T-cell (primary cell): ENCODE measurements at regions of chr10 and their contacts with region 1.

Region 1: GRCh38 chr10:17248964-17249363 is 20.9 kb downstream of the VIM start:
- DNase-seq: no peak
- ATAC-seq: no peak
- H3K4me3 ChIP-seq: no peak overlapping the region
- H3K4me3 Mint-ChIP-seq: no peak overlapping the region
- H3K27ac ChIP-seq: no peak overlapping the region
- H3K27ac Mint-ChIP-seq: no peak overlapping the region
- H3K4me1 ChIP-seq: no peaks in the 10 kb centered on the region
- H3K4me1 Mint-ChIP-seq: no peaks in the 10 kb centered on the region
- H3K27me3 ChIP-seq: no peaks in the 10 kb centered on the region
- H3K27me3 Mint-ChIP-seq: no peaks in the 10 kb centered on the region

Region 2: GRCh38 chr10:16817125-16818019 is 431.6 kb before region 1 on chr10 and contains the start of gene RSU1:
- CTCF ChIA-PET with region 1: interaction called in 1 of 2 experiments, 3 read pairs
- POLR2A ChIA-PET with region 1: interaction called in 1 of 2 experiments, 10 read pairs
- DNase-seq: peak; percentile 99 to 100 (median 100)
- ATAC-seq: peak; percentile 96 to 100 (median 98)
- H3K4me3 ChIP-seq: peak within 1 kb of the TSS; percentile 81 to 93
- H3K4me3 Mint-ChIP-seq: peak within 1 kb of the TSS; percentile 93 to 97 (median 93)
- H3K27ac ChIP-seq: peak within 1 kb of the TSS; percentile 93
- H3K27ac Mint-ChIP-seq: peak within 1 kb of the TSS; percentile 96 to 97
- H3K4me1 ChIP-seq: peaks cover 14 to 28% of the 10 kb centered on the region in 2 experiments
- H3K4me1 Mint-ChIP-seq: peaks cover 41 to 52% (median 42%) of the 10 kb centered on the region in 3 donors
- H3K27me3 ChIP-seq: no peaks in the 10 kb centered on the region
- H3K27me3 Mint-ChIP-seq: no peaks in the 10 kb centered on the region
- total RNA-seq, gene RSU1: 49.5 to 60.4 (median 58.1) TPM